ENCODE measurements at regions of chr2 and their contacts with region 1.

Region 1: DNA sequence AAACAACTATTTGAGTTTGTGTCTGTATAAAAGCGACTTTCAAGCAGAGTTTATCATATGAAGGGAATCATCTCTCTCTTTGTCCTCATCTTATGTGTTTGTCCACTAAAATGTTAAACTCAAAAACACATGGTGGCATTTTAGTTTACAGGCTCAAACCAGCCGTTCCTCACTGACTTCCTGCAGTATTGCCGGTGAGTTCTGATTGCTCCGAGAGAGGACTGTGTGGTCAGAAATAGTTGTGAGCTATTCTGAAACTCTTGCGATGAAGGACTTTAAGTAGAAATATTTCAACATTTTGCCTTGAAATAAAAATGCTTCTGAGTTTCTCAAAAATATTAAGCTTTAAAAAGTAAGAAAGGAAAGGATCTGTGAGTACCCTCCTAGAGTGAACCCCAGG is 163.2 kb upstream of the CAVIN2 start:
- DNase-seq: peak; percentile 18
- ATAC-seq: peak; percentile 16; the same call in 1 of the 2 replicates
- H3K4me3 ChIP-seq: no peak overlapping the region
- H3K27ac ChIP-seq: peak overlapping the region; percentile 93
- H3K4me1 ChIP-seq: peaks cover 18% of the 10 kb centered on the region
- H3K27me3 ChIP-seq: no peaks in the 10 kb centered on the region
- CTCF ChIP-seq: no peak
- POLR2A ChIP-seq: no peak
- RAD21 ChIP-seq: no peak

Region 2: GRCh38 chr2:191811807-191812602 is 198.1 kb before region 1 on chr2:
- CTCF ChIA-PET with region 1: interaction called, 3 read pairs
- POLR2A ChIA-PET with region 1: interaction called, 3 read pairs
- dilution Hi-C with region 1: no loop called
- in situ Hi-C with region 1: no loop called
- intact Hi-C with region 1: loop called (anchors 5 kb)
- DNase-seq: peak; percentile 69
- ATAC-seq: peak; percentile 97
- H3K4me3 ChIP-seq: no peak overlapping the region
- H3K27ac ChIP-seq: no peak overlapping the region
- H3K4me1 ChIP-seq: no peaks in the 10 kb centered on the region
- H3K27me3 ChIP-seq: no peaks in the 10 kb centered on the region
- CTCF ChIP-seq: peak; percentile 95
- POLR2A ChIP-seq: 0 out of 2 replicates have a peak, but pooled peaks have one; percentile 30
- RAD21 ChIP-seq: peak; percentile 97

Measured in IMR-90 (cell line).